ENCODE measurements at regions of chr2 and their contacts with region 1.

Region 1: DNA sequence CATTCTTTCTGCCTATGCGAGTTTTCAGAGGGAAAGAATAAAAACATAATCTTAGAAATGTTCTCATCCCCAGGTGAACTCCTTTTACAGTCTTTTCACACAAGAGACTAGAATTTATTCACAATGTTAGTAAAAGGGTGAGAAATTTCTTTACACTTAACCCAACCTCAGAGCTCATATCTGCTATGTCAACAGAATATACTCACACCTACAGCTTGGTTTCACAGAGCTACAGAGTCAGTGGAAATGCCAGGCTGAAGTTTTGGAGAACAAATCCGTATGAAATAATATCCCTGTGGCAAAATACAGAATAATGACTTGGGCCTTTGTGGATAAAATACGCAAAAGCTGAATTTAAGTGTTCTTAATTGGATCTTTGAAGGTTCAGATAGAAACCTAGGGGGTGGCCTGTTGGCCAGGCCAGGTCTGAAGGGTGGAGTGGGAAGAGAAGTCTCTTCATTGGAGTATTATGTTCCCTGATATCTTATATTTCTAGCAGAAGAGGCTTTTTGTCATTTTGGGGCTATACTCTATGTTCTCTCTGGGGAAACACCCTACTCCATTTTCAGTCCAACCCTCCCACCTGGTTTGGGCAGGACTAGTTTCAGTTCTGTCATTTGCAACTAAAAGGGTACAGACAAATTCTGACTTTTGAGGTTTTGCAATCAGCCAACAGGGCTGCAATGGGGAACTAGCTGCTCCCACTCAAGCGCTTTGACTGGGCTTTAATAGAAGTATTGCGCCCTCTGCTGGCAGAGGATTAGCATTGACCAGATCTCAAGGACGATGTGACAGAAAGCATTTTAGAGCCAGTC is 25.7 kb downstream of the FBXO48 start:
- DNase-seq: peak; percentile 66
- H3K4me3 ChIP-seq: no peak overlapping the region
- H3K27ac ChIP-seq: peak overlapping the region; percentile 70
- H3K4me1 ChIP-seq: peaks cover 16% of the 10 kb centered on the region
- H3K27me3 ChIP-seq: no peaks in the 10 kb centered on the region
- CTCF ChIP-seq: peak; percentile 94

Region 2: DNA sequence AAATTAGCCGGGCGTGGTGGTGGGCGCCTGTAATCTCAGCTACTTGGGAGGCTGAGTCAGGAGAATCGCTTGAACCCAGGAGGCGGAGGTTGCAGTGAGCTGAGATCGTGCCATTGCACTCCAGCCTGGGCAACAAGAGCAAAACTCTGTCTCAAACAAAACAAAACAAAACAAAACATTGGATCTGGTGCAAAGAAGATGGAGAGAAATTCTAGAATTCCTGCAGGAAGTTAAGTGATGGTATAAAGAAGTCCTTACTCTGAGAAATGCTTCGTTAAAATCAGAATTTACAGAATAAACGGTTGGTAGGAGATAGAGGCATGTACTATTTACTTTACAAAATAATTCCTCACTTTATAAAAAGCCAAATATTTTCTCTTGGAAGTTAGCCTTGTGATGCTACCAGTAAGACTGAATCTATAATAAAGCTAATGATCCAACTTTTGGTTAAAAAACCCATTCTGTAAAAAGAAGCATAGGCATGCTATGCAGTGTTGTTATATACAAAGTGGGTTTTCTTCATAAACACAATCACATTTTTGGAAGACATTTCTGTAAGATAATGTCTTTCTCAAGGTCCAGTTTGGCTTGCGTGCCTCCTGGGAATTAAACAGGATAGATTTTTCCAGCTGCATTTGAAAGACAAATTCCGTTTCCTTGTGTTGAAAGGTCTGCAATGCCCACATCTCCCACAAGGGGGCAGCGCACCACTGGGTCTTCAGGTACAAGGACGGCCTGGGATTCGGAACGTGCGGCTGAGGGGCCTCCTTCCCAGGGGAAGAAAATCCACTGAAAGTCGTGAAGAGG is 319.3 kb before region 1 on chr2:
- intact Hi-C with region 1: loop called (anchors 10 kb)
- DNase-seq: peak; percentile 88
- H3K4me3 ChIP-seq: no peak overlapping the region
- H3K27ac ChIP-seq: no peak overlapping the region
- H3K4me1 ChIP-seq: peaks cover 17% of the 10 kb centered on the region
- H3K27me3 ChIP-seq: no peaks in the 10 kb centered on the region
- CTCF ChIP-seq: peak; percentile 99

Region 3: DNA sequence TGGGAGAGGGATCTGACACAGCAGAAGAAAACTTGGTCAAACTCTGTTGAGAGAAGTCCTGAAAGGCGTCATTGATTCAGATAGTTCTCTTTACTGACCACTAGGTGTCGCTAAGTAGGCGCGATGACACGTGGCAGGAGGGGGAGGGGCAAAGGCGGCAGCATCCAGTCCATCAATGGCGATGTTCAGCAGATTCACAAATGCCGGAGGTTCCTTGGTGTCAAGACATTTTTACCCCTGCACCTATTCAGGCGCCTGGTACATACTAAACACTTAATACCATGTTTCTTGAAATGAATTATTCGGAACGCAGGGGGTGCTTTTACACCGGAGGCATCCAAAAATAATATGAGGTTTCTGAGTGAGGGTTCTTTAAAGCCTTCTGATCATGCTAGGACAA is 79.3 kb before region 1 on chr2:
- intact Hi-C with region 1: loop called (anchors 5 kb)
- DNase-seq: peak; percentile 77
- H3K4me3 ChIP-seq: no peak overlapping the region
- H3K27ac ChIP-seq: no peak overlapping the region
- H3K4me1 ChIP-seq: peaks cover 6% of the 10 kb centered on the region
- H3K27me3 ChIP-seq: no peaks in the 10 kb centered on the region
- CTCF ChIP-seq: peak; percentile 84

Region 4: DNA sequence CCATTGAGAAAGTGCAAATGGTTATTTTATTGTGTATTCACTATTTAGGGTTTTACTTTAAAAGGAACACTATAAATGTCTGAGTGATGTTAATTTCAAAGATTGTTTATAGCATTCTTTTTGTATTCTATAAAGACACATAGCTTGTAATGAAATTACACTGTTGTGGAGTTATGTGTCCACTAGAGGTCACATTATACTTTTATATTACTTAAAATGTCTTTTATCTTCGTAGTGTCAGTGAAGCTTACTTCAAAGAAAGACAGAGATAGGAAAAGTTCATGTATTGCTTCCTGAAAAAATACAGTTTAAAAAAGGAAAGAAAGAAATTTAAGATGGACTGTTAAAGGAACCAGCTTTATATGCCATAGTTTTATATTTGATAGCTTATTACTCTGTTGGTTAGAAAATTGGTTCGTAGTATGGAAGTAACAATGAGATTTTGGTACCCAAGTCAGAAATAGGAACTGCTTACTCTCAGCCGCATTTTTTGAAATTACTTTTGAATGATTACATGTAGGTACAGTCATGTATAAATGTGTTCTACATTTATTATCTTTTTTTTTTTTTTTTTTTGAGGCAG is 46.5 kb after region 1 on chr2:
- intact Hi-C with region 1: no loop called
- DNase-seq: no peak
- H3K4me3 ChIP-seq: no peak overlapping the region
- H3K27ac ChIP-seq: no peak overlapping the region
- H3K4me1 ChIP-seq: no peaks in the 10 kb centered on the region
- H3K27me3 ChIP-seq: no peaks in the 10 kb centered on the region
- CTCF ChIP-seq: peak; percentile 68